Cardiac septum (tissue), 1 donor: ENCODE measurements at regions of chr9 and their contacts with region 1.

Region 1: GRCh38 chr9:136679431-136679941 is 7.8 kb downstream of the AGPAT2 start:
- DNase-seq: no peak

Region 2: GRCh38 chr9:136502942-136503550 is 176.4 kb before region 1 on chr9:
- intact Hi-C with region 1: loop called (anchors 5 kb)
- DNase-seq: no peak

Region 3: GRCh38 chr9:136721339-136722092 is 42.0 kb after region 1 on chr9:
- intact Hi-C with region 1: loop called (anchors 5 kb)
- DNase-seq: no peak